PC-9 (cell line): ENCODE measurements at regions of chr1 and their contacts with region 1.

Region 1: GRCh38 chr1:156104065-156104810 is 10.3 kb upstream of the LMNA start:
- DNase-seq: peak; percentile 70 to 85
- H3K4me3 ChIP-seq: no peak overlapping the region
- H3K27ac ChIP-seq: no peak overlapping the region
- H3K4me1 ChIP-seq: peaks cover 95% of the 10 kb centered on the region
- H3K27me3 ChIP-seq: no peaks in the 10 kb centered on the region
- CTCF ChIP-seq: no peak

Region 2: GRCh38 chr1:155172732-155173477 is 931.3 kb before region 1 on chr1 and contains the start of gene KRTCAP2:
- CTCF ChIA-PET with region 1: no interaction called
- POLR2A ChIA-PET with region 1: no interaction called
- intact Hi-C with region 1: no loop called
- DNase-seq: peak; percentile 89 to 93
- H3K4me3 ChIP-seq: peak within 1 kb of the TSS; percentile 89
- H3K27ac ChIP-seq: peak within 1 kb of the TSS; percentile 59
- H3K4me1 ChIP-seq: peaks cover 30% of the 10 kb centered on the region
- H3K27me3 ChIP-seq: no peaks in the 10 kb centered on the region
- CTCF ChIP-seq: peak; percentile 94
- total RNA-seq, gene KRTCAP2: 112 and 156 TPM in 2 replicates

Region 3: DNA sequence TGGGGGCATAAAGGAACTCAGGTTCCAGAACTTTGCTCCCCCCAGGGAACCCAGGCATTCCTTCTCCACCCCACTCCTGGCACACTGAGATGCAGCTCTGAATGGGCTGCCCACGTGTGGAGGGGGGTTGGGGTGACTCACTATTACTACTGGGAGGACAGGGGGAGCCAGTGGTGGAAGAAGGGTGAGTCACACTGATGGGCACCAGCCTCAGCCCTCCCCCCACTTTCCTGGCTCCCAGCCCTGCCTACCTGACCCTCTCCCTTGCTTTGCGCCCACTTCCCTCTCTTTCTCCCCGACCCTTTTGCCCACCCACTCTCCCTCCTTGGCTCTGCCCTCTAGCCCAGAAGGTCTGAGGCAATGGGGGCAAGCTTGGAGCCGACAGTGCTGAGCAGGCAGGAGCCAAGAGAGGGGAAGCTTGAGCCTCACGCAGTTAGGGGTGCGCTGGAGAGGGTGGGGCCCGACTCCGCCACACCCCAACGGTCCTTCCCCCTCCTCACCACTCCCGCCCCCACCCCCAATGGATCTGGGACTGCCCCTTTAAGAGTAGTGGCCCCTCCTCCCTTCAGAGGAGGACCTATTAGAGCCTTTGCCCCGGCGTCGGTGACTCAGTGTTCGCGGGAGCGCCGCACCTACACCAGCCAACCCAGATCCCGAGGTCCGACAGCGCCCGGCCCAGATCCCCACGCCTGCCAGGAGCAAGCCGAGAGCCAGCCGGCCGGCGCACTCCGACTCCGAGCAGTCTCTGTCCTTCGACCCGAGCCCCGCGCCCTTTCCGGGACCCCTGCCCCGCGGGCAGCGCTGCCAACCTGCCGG is 10.1 kb after region 1 on chr1 and contains the start of gene LMNA:
- CTCF ChIA-PET with region 1: interaction called, 8 read pairs
- POLR2A ChIA-PET with region 1: interaction called, 24 read pairs
- intact Hi-C with region 1: loop called (anchors 1 kb)
- DNase-seq: peak; percentile 90 to 94
- H3K4me3 ChIP-seq: peak within 1 kb of the TSS; percentile 100
- H3K27ac ChIP-seq: peak within 1 kb of the TSS; percentile 69
- H3K4me1 ChIP-seq: peaks cover 65% of the 10 kb centered on the region
- H3K27me3 ChIP-seq: no peaks in the 10 kb centered on the region
- CTCF ChIP-seq: no peak
- total RNA-seq, gene LMNA: 569 and 580 TPM in 2 replicates

Region 4: GRCh38 chr1:156123356-156124196 is 19.3 kb after region 1 on chr1:
- CTCF ChIA-PET with region 1: interaction called, 10 read pairs
- POLR2A ChIA-PET with region 1: interaction called, 18 read pairs
- intact Hi-C with region 1: loop called (anchors 1 kb)
- DNase-seq: peak; percentile 94 to 95
- H3K4me3 ChIP-seq: peak overlapping the region; percentile 56
- H3K27ac ChIP-seq: peak overlapping the region; percentile 98
- H3K4me1 ChIP-seq: peaks cover 98% of the 10 kb centered on the region
- H3K27me3 ChIP-seq: no peaks in the 10 kb centered on the region
- CTCF ChIP-seq: peak; percentile 42; the same call in 1 of the 2 replicates

Region 5: GRCh38 chr1:157496121-157496526 is 1391.9 kb after region 1 on chr1:
- CTCF ChIA-PET with region 1: no interaction called
- POLR2A ChIA-PET with region 1: no interaction called
- intact Hi-C with region 1: no loop called
- DNase-seq: peak in 1 of 2 experiments; percentile 28
- H3K4me3 ChIP-seq: no peak overlapping the region
- H3K27ac ChIP-seq: no peak overlapping the region
- H3K4me1 ChIP-seq: no peaks in the 10 kb centered on the region
- H3K27me3 ChIP-seq: peaks cover 11% of the 10 kb centered on the region; the same call in 1 of the 2 replicates
- CTCF ChIP-seq: peak; percentile 94